AG04449 (cell line): ENCODE measurements at regions of chr3 and their contacts with region 1.

Region 1: DNA sequence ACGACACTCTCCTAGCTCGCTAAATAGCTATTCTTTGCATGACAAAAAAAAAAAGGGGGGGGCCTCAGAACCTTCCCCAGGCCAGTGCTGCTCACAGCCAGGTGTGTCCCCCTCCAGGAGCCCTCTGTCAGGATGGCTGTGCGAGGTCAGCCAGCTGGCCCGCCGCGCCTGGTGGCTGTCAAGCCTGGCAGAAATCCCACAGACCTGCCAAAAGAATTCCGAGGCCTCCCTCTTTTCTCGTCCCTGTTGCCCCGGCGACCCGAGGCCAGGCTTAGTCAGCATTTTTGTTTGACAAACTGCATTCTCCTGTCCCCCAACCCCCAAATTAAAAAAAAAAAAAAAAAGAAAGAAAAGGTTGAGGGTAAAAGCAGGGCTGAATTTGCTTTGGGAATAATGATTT is 61.9 kb downstream of the TM4SF4 start:
- DNase-seq: no peak
- H3K4me3 ChIP-seq: no peak overlapping the region
- CTCF ChIP-seq: no peak

Region 2: GRCh38 chr3:149547938-149548668 is 11.7 kb after region 1 on chr3:
- CTCF ChIA-PET with region 1: interaction called, 19 read pairs
- POLR2A ChIA-PET with region 1: interaction called, 3 read pairs
- DNase-seq: peak; percentile 46
- H3K4me3 ChIP-seq: no peak overlapping the region
- CTCF ChIP-seq: no peak

Region 3: DNA sequence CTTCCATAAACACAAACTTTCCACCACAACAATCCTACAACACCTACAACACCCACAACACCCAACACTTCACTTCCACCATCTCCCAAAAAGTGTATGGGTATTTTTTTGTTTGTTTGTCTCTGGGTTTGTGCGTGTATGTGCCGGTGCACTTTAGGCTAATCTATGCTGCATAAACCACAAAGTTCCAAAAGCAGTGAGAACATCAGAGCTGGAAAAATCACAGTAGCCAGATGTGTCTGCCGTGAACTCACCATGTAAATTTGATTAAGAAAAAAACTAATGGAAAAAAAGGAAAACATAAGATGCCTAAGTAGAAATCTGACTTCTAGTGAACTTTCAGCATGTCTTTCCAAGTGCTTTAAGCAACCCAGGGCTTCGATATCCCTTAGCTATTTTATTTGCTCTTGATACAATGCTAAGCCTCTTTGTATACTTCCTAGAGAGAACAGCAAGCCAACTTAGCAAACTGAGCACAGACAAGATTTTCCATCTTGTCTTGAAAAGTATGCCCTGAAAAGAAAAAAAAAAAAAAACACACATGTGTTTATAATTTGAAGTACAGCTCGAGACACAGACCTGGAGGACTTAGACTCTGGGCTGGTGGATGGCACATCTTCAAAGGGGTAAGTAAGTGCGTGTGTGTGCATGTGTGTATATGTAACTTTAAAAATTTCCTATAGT is 30.0 kb after region 1 on chr3:
- CTCF ChIA-PET with region 1: interaction called, 33 read pairs
- POLR2A ChIA-PET with region 1: interaction called, 4 read pairs
- DNase-seq: no peak
- H3K4me3 ChIP-seq: no peak overlapping the region
- CTCF ChIP-seq: no peak

Region 4: GRCh38 chr3:149702691-149703441 is 166.4 kb after region 1 on chr3:
- CTCF ChIA-PET with region 1: interaction called, 16 read pairs
- POLR2A ChIA-PET with region 1: interaction called, 3 read pairs
- DNase-seq: peak; percentile 82
- H3K4me3 ChIP-seq: no peak overlapping the region
- CTCF ChIP-seq: no peak